ENCODE measurements at regions of chr10 and their contacts with region 1.

Region 1: DNA sequence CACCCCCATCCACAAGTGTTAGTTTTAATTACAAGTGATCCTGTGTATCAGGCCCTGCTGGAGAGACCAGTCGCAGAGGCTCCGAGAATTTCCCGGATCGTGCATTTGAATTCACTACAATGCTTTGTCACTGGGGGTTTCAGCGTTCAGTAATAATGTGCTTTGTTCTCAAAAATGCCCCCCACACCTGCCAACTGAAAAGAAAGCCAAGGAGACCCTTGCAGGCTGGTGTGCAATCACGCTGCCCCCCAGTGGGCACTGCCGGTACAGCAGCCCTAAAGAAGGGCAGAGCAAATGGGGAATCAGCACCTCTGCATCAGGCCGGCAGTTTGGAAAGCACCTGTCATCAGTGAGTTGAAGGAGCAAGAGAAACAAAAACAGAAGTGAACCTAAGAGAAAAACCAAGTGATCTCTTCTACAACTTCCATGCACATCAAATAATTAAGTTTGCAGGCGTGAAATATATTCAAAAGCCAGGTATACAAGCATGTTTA is 177.6 kb downstream of the PARD3 start:
- DNase-seq: peak; percentile 21 to 77 (median 58)
- ATAC-seq: peak; percentile 81
- H3K4me3 ChIP-seq: no peak overlapping the region
- H3K4me3 Mint-ChIP-seq: no peak overlapping the region
- H3K27ac ChIP-seq: no peak overlapping the region
- H3K27ac Mint-ChIP-seq: no peak overlapping the region
- H3K4me1 ChIP-seq: no peaks in the 10 kb centered on the region
- H3K4me1 Mint-ChIP-seq: peaks cover 11% of the 10 kb centered on the region
- H3K27me3 ChIP-seq: no peaks in the 10 kb centered on the region
- H3K27me3 Mint-ChIP-seq: no peaks in the 10 kb centered on the region
- CTCF ChIP-seq: peak; percentile 79

Region 2: DNA sequence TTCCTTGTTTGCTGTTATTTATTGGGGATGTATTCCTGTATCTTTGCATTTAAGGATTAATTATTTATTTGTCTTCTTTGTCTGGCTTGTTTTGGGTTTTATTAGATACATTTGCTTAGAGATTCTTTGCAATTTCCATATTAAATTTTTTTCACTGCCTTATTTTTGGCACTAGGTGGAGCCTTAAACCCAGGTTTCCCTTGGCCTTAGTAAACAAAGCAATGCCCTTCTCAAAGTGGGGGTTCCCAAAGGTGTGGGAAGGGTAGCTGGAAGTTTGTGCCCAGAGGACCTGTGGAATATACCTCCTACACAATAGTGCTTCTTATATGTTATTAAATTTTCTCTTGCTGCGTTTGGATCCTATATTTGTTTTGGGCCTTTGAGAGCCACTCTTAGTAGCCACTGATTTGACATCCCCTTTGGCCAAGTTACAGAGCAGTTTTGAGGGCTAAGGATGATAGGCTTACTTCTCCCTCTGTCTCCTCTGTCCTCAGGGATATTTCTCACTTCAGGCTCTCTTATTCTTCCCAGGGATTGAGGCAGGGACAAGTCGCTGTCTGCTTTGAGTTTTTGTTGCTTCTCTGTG is 1841.8 kb before region 1 on chr10:
- CTCF ChIA-PET with region 1: no interaction called
- POLR2A ChIA-PET with region 1: no interaction called
- intact Hi-C with region 1: loop called (anchors 5 kb)
- DNase-seq: peak in 2 of 9 experiments; percentile 53 to 64
- ATAC-seq: no peak
- H3K4me3 ChIP-seq: no peak overlapping the region
- H3K4me3 Mint-ChIP-seq: no peak overlapping the region
- H3K27ac ChIP-seq: no peak overlapping the region
- H3K27ac Mint-ChIP-seq: no peak overlapping the region
- H3K4me1 ChIP-seq: no peaks in the 10 kb centered on the region
- H3K4me1 Mint-ChIP-seq: no peaks in the 10 kb centered on the region
- H3K27me3 ChIP-seq: no peaks in the 10 kb centered on the region
- H3K27me3 Mint-ChIP-seq: peaks cover 3% of the 10 kb centered on the region
- CTCF ChIP-seq: peak; percentile 53

Region 3: DNA sequence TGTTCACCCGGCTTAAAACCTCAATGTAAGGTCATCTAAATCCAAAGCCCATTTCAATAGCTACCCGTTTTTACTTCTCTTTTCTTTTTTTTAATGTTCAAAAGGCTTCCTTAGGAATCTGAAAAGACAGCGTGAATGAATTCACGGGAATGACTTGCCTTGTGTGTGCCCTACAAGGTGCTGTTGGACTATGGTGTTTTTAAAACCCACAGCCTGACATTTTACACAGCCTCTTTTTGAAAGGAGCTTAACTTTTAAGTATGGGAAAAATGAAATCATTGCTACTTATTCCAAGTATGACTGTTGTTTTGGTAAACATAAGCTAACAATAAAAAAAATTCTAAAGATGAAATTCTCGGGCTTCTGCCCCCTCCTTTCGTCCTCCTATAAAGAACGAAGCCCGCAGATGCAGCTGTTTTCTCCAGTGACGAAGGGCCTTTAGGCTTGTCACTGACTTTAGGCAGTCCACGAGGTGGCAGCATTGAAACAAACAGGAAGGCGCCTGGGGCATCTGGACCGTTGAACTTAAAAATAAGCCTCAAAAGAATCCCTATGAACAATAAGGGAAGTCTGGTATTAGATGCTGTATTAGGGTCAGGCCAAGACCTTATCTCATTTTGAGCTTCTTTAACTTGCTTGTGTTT is 1444.3 kb before region 1 on chr10:
- CTCF ChIA-PET with region 1: interaction called, 12 read pairs
- POLR2A ChIA-PET with region 1: no interaction called
- intact Hi-C with region 1: loop called in 1 of 2 experiments (anchors 1 kb)
- DNase-seq: peak; percentile 25 to 84 (median 69)
- ATAC-seq: peak; percentile 58
- H3K4me3 ChIP-seq: no peak overlapping the region
- H3K4me3 Mint-ChIP-seq: no peak overlapping the region
- H3K27ac ChIP-seq: no peak overlapping the region
- H3K27ac Mint-ChIP-seq: no peak overlapping the region
- H3K4me1 ChIP-seq: no peaks in the 10 kb centered on the region
- H3K4me1 Mint-ChIP-seq: no peaks in the 10 kb centered on the region
- H3K27me3 ChIP-seq: no peaks in the 10 kb centered on the region
- H3K27me3 Mint-ChIP-seq: peaks cover 4% of the 10 kb centered on the region
- CTCF ChIP-seq: peak; percentile 59

Region 4: GRCh38 chr10:33330543-33331378 is 1306.7 kb before region 1 on chr10:
- CTCF ChIA-PET with region 1: interaction called, 7 read pairs
- POLR2A ChIA-PET with region 1: no interaction called
- intact Hi-C with region 1: loop called in 1 of 2 experiments (anchors 1 kb)
- DNase-seq: peak; percentile 48 to 85 (median 74)
- ATAC-seq: peak; percentile 56
- H3K4me3 ChIP-seq: no peak overlapping the region
- H3K4me3 Mint-ChIP-seq: no peak overlapping the region
- H3K27ac ChIP-seq: no peak overlapping the region
- H3K27ac Mint-ChIP-seq: no peak overlapping the region
- H3K4me1 ChIP-seq: peaks cover 15% of the 10 kb centered on the region
- H3K4me1 Mint-ChIP-seq: peaks cover 18% of the 10 kb centered on the region
- H3K27me3 ChIP-seq: peaks cover 16 to 17% of the 10 kb centered on the region in 2 experiments
- H3K27me3 Mint-ChIP-seq: peaks cover 47% of the 10 kb centered on the region
- CTCF ChIP-seq: peak; percentile 96

Region 5: GRCh38 chr10:34522546-34522945 is 114.9 kb before region 1 on chr10:
- CTCF ChIA-PET with region 1: interaction called, 4 read pairs
- POLR2A ChIA-PET with region 1: no interaction called
- intact Hi-C with region 1: loop called in 1 of 2 experiments (anchors 10 kb)
- DNase-seq: peak in 1 of 9 experiments; percentile 20
- ATAC-seq: no peak
- H3K4me3 ChIP-seq: no peak overlapping the region
- H3K4me3 Mint-ChIP-seq: peak overlapping the region; percentile 44
- H3K27ac ChIP-seq: no peak overlapping the region
- H3K27ac Mint-ChIP-seq: no peak overlapping the region
- H3K4me1 ChIP-seq: no peaks in the 10 kb centered on the region
- H3K4me1 Mint-ChIP-seq: peaks cover 3% of the 10 kb centered on the region
- H3K27me3 ChIP-seq: no peaks in the 10 kb centered on the region
- H3K27me3 Mint-ChIP-seq: no peaks in the 10 kb centered on the region
- CTCF ChIP-seq: no peak

Region 6: GRCh38 chr10:34647875-34648865 is 10.7 kb after region 1 on chr10:
- CTCF ChIA-PET with region 1: interaction called, 35 read pairs
- POLR2A ChIA-PET with region 1: no interaction called
- intact Hi-C with region 1: no loop called
- DNase-seq: no peak
- ATAC-seq: no peak
- H3K4me3 ChIP-seq: no peak overlapping the region
- H3K4me3 Mint-ChIP-seq: no peak overlapping the region
- H3K27ac ChIP-seq: no peak overlapping the region
- H3K27ac Mint-ChIP-seq: no peak overlapping the region
- H3K4me1 ChIP-seq: no peaks in the 10 kb centered on the region
- H3K4me1 Mint-ChIP-seq: no peaks in the 10 kb centered on the region
- H3K27me3 ChIP-seq: no peaks in the 10 kb centered on the region
- H3K27me3 Mint-ChIP-seq: no peaks in the 10 kb centered on the region
- CTCF ChIP-seq: no peak

Region 7: DNA sequence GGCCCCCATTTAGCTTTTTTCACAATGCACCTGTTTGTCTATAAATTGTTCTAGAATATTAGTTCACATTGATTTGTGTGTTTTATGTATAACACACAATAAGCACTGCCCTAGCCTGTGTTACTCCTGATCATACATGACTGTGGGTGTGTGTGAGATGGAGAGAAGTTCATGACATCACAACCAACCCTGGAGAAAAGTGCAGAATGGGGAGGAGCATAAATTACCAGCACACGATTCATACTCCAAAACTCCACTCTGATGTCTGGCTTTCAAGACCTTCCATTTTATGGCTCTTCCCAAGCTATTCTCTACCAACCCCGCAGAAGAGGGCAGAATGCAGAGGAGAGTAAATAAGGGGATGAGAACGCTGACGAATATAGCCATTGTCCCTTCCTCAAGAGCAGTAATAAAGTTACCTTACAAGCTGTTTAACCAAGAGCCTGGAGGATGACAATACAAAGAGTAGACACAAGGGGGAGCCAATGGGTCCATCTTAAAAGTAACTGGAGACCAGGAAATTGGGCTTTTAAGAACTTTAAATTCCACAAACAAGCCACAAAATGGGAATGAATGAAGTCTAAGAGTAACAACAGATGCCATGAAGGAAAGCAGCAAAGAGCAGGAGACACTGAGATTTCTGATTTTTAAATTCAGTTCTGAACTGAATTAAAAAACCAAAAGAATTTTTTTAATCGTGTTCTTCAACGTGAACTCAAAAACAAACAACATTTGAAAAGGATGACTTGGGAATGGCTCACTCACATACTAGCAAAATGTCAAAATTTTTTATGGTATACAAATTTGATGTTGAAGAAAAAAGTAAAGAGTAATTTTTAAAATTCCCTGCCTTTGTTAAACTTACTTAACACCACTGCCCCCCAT is 18.1 kb after region 1 on chr10:
- CTCF ChIA-PET with region 1: interaction called, 11 read pairs
- POLR2A ChIA-PET with region 1: no interaction called
- intact Hi-C with region 1: no loop called
- DNase-seq: peak in 2 of 9 experiments; percentile 26 to 40
- ATAC-seq: no peak
- H3K4me3 ChIP-seq: no peak overlapping the region
- H3K4me3 Mint-ChIP-seq: no peak overlapping the region
- H3K27ac ChIP-seq: no peak overlapping the region
- H3K27ac Mint-ChIP-seq: no peak overlapping the region
- H3K4me1 ChIP-seq: no peaks in the 10 kb centered on the region
- H3K4me1 Mint-ChIP-seq: no peaks in the 10 kb centered on the region
- H3K27me3 ChIP-seq: no peaks in the 10 kb centered on the region
- H3K27me3 Mint-ChIP-seq: peaks cover 4% of the 10 kb centered on the region
- CTCF ChIP-seq: peak; percentile 42

Region 8: GRCh38 chr10:34866848-34867247 is 229.4 kb after region 1 on chr10:
- CTCF ChIA-PET with region 1: no interaction called
- POLR2A ChIA-PET with region 1: no interaction called
- intact Hi-C with region 1: no loop called
- DNase-seq: no peak
- ATAC-seq: no peak
- H3K4me3 ChIP-seq: no peak overlapping the region
- H3K4me3 Mint-ChIP-seq: no peak overlapping the region
- H3K27ac ChIP-seq: no peak overlapping the region
- H3K27ac Mint-ChIP-seq: no peak overlapping the region
- H3K4me1 ChIP-seq: no peaks in the 10 kb centered on the region
- H3K4me1 Mint-ChIP-seq: peaks cover 6% of the 10 kb centered on the region
- H3K27me3 ChIP-seq: peaks cover 0 to 2% of the 10 kb centered on the region in 2 experiments
- H3K27me3 Mint-ChIP-seq: peaks cover 4% of the 10 kb centered on the region
- CTCF ChIP-seq: no peak